ENCODE measurements at regions of chr18 and their contacts with region 1.

Region 1: GRCh38 chr18:9876867-9877654 is 8.7 kb upstream of the TXNDC2 start:
- DNase-seq: peak; percentile 52
- H3K4me3 Mint-ChIP-seq: no peak overlapping the region
- H3K27ac Mint-ChIP-seq: peak overlapping the region; percentile 20
- H3K4me1 Mint-ChIP-seq: peaks cover 14% of the 10 kb centered on the region
- H3K27me3 Mint-ChIP-seq: peaks cover 16% of the 10 kb centered on the region

Region 2: DNA sequence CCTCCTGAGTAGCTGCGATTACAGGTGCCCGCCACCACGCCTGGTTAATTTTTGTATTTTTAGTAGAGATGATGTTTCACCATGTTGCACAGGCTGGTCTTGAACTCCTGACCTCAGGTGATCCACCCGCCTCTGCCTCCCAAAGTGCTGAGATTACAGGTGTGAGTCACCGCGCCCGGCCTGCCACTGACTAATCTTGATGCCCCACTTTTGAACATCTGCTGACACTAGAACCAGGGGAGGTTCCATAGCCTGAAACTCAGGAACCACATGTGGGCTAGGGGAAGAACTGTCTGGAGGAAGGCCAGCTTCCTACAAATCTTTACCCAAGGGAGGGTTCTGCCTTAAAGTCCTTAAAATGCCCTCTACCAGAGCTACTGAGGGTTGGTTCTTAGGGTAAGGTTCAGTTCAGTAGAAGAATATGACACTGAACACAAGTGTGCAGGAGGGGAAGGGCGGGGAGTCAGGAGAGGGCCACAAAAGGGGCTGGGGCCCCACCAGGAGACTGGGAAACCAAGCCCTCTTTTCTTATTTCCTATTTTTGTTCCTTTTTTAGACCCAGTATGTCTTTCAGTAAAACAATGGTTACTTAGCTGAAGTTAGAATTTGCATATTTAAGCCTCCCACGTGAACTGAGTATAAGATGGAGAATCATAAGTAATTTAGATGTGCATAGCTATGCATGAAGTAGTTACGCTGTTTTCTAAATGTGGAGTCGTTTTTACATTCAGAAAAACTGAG is 175.3 kb before region 1 on chr18:
- CTCF ChIA-PET with region 1: no interaction called
- POLR2A ChIA-PET with region 1: no interaction called
- intact Hi-C with region 1: loop called (anchors 5 kb)
- DNase-seq: peak; percentile 66
- H3K4me3 Mint-ChIP-seq: no peak overlapping the region
- H3K27ac Mint-ChIP-seq: no peak overlapping the region
- H3K4me1 Mint-ChIP-seq: peaks cover 17% of the 10 kb centered on the region
- H3K27me3 Mint-ChIP-seq: peaks cover 40% of the 10 kb centered on the region

Region 3: DNA sequence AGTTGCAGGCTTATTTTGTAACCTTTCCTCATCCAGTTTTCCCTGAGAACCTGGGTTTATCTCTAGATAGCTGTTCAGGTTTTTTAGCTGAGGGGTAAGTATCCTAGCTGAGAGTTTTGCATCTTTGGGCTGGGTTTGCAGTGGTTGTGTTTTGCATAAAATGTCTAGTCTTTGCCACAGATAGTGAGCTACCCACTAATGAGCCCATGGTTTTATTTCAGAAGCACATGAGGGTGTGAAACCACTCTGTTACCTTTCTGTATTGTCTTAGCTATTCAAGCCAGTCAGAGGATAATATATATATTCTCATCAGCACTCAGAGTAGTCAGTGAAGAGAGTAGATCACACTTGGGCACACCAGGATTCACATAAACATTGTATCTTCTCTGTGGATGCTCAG is 15.9 kb before region 1 on chr18:
- CTCF ChIA-PET with region 1: no interaction called
- POLR2A ChIA-PET with region 1: interaction called, 6 read pairs
- intact Hi-C with region 1: loop called (anchors 1 kb)
- DNase-seq: no peak
- H3K4me3 Mint-ChIP-seq: no peak overlapping the region
- H3K27ac Mint-ChIP-seq: no peak overlapping the region
- H3K4me1 Mint-ChIP-seq: peaks cover 19% of the 10 kb centered on the region
- H3K27me3 Mint-ChIP-seq: peaks cover 29% of the 10 kb centered on the region